Heart right ventricle (tissue), 16 donors: ENCODE measurements at regions of chr1 and their contacts with region 1.

Region 1: DNA sequence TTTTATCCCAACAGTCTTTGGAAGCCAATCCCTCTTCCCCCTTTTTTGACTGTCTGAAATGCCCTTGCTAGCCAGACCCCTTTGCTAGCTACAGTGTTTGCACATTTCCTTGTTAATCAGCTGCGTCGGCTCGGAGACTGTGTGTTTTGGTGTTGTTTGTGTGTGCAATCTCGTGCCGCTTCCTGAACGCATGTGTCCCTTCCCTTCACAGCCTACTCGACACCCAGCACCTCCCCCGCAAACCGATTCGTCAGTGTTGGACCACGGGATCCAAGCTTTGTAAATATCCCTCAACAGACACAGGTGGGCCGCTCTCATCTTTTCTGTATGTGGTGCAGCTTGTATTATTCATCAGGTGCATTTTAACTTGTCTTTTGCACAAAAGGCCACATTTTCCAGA is 298.7 kb downstream of the TM2D1 start:
- DNase-seq: peak in 1 of 2 donors; percentile 75
- ATAC-seq: peak in 7 of 8 donors; percentile 57 to 90 (median 85)
- H3K4me3 ChIP-seq: no peak overlapping the region
- H3K27ac ChIP-seq: peak overlapping the region in 7 of 10 donors; percentile 5 to 68 (median 50)
- H3K4me1 ChIP-seq: peaks cover 5 to 40% (median 34%) of the 10 kb centered on the region in 9 donors
- H3K27me3 ChIP-seq: no peaks in the 10 kb centered on the region
- CTCF ChIP-seq: no peak

Region 2: GRCh38 chr1:61388566-61388965 is 37.7 kb before region 1 on chr1:
- intact Hi-C with region 1: loop called in 1 of 10 experiments (anchors 2 kb)
- DNase-seq: no peak
- ATAC-seq: no peak
- H3K4me3 ChIP-seq: no peak overlapping the region
- H3K27ac ChIP-seq: no peak overlapping the region
- H3K4me1 ChIP-seq: peaks cover 0 to 29% (median 11%) of the 10 kb centered on the region in 9 donors
- H3K27me3 ChIP-seq: no peaks in the 10 kb centered on the region
- CTCF ChIP-seq: no peak

Region 3: DNA sequence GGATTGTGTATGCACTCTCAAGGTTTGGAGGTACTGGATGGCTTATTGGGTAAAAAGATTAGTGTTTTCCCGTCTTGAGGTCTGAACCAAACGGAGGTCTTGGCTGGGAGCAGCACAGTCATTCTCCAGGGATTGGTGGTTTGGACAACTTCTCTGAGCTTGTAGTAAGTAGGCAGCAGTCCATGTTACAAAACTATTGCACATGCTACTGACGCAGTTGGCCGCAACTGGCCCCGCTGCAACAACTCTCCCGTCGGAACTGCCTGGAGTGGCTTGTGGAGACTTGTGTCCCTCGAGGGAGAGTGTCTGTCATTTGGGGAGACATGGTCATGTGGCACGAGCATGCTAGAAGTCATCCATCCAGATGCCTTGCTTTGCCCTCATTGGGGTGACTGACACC is 22.7 kb after region 1 on chr1:
- intact Hi-C with region 1: no loop called
- DNase-seq: peak; percentile 73 to 86
- ATAC-seq: peak; percentile 40 to 74 (median 56)
- H3K4me3 ChIP-seq: no peak overlapping the region
- H3K27ac ChIP-seq: peak overlapping the region; percentile 48 to 91 (median 83)
- H3K4me1 ChIP-seq: peaks cover 33 to 100% (median 96%) of the 10 kb centered on the region in 9 donors
- H3K27me3 ChIP-seq: no peaks in the 10 kb centered on the region
- CTCF ChIP-seq: no peak